ENCODE measurements at regions of chr10 and their contacts with region 1.

Region 1: DNA sequence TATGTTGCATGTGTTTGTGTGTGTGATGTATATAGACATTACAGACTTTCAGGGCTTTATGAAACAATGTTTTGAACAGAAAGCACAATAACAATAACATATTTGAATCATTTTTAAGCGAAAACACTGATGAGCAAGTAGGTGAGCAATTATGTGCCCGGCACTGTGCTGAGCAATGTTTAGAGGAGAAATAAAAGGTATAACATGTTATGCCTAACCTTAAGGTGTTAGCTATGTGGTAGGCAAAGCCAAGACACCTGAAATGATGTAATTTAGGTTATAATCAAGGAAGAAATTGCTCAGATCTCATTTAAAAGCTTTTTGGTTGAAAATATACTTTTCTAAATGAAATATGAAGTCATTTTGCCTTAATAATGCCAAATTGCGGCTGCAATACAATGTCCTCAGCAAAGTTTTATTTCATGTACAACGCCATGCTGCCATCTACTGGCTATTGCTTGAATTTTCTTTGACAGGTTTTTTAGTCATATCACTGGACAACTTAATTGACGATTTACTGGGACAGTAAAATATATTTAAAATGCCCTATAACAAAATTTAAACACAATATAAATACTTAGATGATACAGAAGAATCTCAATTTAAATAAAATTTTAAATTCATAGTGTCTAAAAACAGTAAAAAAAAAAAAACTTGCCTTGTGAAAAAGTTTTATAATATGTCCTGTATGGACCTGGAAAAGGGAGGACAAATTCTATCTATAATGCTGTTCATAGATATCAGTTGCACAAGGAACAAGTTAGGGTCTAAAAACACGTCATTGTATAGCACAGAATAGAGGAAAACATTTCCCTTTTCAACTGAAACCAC is 131.1 kb upstream of the CDK1 start:
- DNase-seq: peak in 1 of 2 experiments; percentile 49
- H3K4me3 ChIP-seq: no peak overlapping the region
- H3K27ac ChIP-seq: no peak overlapping the region
- H3K4me1 ChIP-seq: peaks cover 13% of the 10 kb centered on the region
- H3K27me3 ChIP-seq: no peaks in the 10 kb centered on the region
- CTCF ChIP-seq: peak; percentile 92

Region 2: GRCh38 chr10:60099998-60100747 is 547.0 kb before region 1 on chr10:
- CTCF ChIA-PET with region 1: no interaction called
- POLR2A ChIA-PET with region 1: no interaction called
- intact Hi-C with region 1: loop called (anchors 1 kb)
- DNase-seq: peak; percentile 15 to 59
- H3K4me3 ChIP-seq: no peak overlapping the region
- H3K27ac ChIP-seq: no peak overlapping the region
- H3K4me1 ChIP-seq: no peaks in the 10 kb centered on the region; the same call in 1 of the 2 replicates
- H3K27me3 ChIP-seq: no peaks in the 10 kb centered on the region
- CTCF ChIP-seq: peak; percentile 86

Region 3: GRCh38 chr10:60208676-60209269 is 438.4 kb before region 1 on chr10:
- CTCF ChIA-PET with region 1: interaction called, 4 read pairs
- POLR2A ChIA-PET with region 1: no interaction called
- intact Hi-C with region 1: loop called (anchors 10 kb)
- DNase-seq: peak in 1 of 2 experiments; percentile 60
- H3K4me3 ChIP-seq: no peak overlapping the region
- H3K27ac ChIP-seq: no peak overlapping the region
- H3K4me1 ChIP-seq: peaks cover 8% of the 10 kb centered on the region
- H3K27me3 ChIP-seq: no peaks in the 10 kb centered on the region
- CTCF ChIP-seq: peak; percentile 89

Region 4: GRCh38 chr10:60351191-60351853 is 295.9 kb before region 1 on chr10:
- CTCF ChIA-PET with region 1: no interaction called
- POLR2A ChIA-PET with region 1: interaction called, 22 read pairs
- intact Hi-C with region 1: no loop called
- DNase-seq: no peak
- H3K4me3 ChIP-seq: no peak overlapping the region
- H3K27ac ChIP-seq: no peak overlapping the region
- H3K4me1 ChIP-seq: no peaks in the 10 kb centered on the region; the same call in 1 of the 2 replicates
- H3K27me3 ChIP-seq: no peaks in the 10 kb centered on the region
- CTCF ChIP-seq: no peak

Region 5: DNA sequence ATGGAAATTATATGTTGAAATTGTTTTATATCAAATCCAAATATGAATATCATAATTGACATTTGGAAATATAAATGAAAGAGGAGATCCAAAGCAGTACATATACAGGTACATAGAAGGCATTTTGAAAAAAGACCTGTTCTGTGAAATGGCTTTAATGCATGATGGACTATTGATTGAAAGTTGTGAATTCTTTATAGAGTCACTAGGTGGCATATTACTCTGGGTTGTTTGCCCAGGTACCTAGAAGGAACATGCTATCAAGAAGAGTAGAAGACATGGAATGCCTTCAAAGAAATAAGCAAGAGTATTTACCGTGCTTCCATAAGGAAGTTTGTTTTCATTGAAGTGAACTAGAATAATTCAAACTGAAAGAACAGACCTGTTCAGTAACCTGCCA is 97.5 kb before region 1 on chr10:
- CTCF ChIA-PET with region 1: interaction called, 3 read pairs
- POLR2A ChIA-PET with region 1: no interaction called
- intact Hi-C with region 1: loop called (anchors 1 kb)
- DNase-seq: no peak
- H3K4me3 ChIP-seq: no peak overlapping the region
- H3K27ac ChIP-seq: no peak overlapping the region
- H3K4me1 ChIP-seq: no peaks in the 10 kb centered on the region
- H3K27me3 ChIP-seq: no peaks in the 10 kb centered on the region
- CTCF ChIP-seq: peak; percentile 63

Region 6: DNA sequence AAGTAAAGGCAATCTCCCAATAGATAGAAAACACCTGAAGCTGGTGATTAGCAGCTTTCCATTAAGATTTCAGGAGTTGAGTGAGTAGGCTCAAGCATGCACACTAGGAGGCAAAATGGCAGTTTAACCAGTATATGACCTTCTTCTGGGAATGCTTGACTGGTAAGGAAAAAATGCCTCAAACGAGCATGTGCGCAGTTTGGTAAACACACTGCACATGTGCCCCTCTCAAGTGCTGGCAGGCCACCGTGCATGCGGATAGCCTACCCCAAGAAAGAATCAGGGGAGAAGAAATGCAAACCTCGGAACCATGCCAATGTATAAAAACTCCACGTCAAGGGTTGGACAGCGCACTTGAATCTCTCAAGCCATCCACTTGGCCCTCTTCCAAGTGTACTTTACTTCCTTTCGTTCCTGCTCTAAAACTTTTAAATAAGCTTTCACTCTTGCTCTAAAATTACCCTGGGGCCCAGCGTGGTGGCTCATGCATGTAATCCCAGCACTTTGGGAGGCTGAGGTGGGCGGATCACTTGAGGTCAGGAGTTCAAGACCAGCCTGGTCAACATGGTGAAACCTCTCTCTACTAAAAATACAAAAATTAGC is 32.3 kb after region 1 on chr10:
- CTCF ChIA-PET with region 1: no interaction called
- POLR2A ChIA-PET with region 1: no interaction called
- intact Hi-C with region 1: no loop called
- DNase-seq: no peak
- H3K4me3 ChIP-seq: no peak overlapping the region
- H3K27ac ChIP-seq: no peak overlapping the region
- H3K4me1 ChIP-seq: no peaks in the 10 kb centered on the region
- H3K27me3 ChIP-seq: no peaks in the 10 kb centered on the region
- CTCF ChIP-seq: no peak

Region 7: DNA sequence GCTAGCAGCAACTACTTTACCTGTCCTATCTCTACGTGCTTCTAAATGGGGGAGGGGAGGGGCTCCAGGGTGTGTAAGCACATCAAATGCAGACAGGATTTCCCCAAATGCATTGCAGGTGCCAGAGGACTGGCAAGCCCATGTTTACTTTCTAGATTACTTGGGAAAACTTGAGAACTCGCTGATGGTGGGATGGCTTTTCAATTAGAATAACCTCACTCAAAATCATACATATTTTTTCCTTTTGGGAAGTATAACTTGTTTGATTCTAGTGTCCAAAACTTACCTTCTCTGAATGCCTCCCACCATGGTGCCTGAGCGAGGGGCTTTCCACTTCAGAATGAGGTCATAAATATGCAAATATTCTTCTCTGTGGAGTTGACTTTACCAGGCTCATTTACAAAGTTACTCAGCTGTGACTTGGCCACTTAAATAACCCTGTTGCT is 488.1 kb after region 1 on chr10:
- CTCF ChIA-PET with region 1: no interaction called
- POLR2A ChIA-PET with region 1: no interaction called
- intact Hi-C with region 1: no loop called
- DNase-seq: no peak
- H3K4me3 ChIP-seq: no peak overlapping the region
- H3K27ac ChIP-seq: no peak overlapping the region
- H3K4me1 ChIP-seq: 0 out of 2 replicates have a peak, but pooled peaks cover under 1% of the 10 kb centered on the region
- H3K27me3 ChIP-seq: no peaks in the 10 kb centered on the region
- CTCF ChIP-seq: no peak

Measured in PC-9 (cell line).